ENCODE measurements at regions of chr3 and their contacts with region 1.

Region 1: DNA sequence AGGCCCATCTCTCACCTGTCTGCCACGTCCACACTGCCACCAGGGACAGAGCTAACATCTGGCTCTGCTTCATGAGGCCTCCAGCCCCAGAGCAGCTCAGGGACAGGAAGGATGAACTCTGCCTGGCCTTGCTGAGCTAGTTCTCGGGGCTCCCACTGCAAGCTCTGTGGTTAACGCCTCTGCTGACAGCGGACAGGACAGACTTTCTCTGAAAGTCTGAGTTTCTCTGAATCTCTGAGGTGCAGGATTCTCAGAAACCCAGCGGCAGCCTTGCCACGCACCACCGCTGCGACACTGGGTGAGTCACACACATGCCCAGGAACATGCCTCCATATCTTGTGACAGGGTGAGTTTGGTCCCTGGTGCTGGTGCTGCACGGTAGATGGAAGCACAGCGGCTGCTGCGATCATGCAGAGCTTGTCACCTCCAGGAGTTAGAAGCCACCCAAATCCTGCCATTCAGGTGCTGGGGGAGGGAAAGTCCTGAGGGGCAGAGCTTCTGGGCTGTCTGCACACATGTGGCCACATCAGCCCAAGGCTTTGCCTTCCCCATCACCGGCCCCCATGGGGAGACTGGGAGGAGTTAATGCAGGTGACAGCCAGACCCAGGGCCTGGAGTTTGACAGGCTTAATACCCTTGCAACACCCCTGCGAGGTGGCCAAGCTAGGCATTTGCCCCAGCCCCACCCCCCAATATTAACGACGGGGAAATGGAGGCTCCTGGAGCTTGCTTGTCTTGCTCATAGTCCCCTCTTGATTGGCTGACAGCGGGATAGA is 267.0 kb downstream of the PLCL2 start:
- DNase-seq: peak; percentile 80 to 87
- ATAC-seq: peak; percentile 82 to 90 (median 87)
- H3K4me3 ChIP-seq: peak overlapping the region; percentile 2
- H3K4me3 Mint-ChIP-seq: peak overlapping the region; percentile 75
- H3K27ac ChIP-seq: peak overlapping the region; percentile 81
- H3K27ac Mint-ChIP-seq: peak overlapping the region; percentile 85 to 86
- H3K4me1 ChIP-seq: peaks cover 68% of the 10 kb centered on the region
- H3K4me1 Mint-ChIP-seq: peaks cover 74 to 80% of the 10 kb centered on the region in 2 donors
- H3K27me3 ChIP-seq: no peaks in the 10 kb centered on the region
- H3K27me3 Mint-ChIP-seq: no peaks in the 10 kb centered on the region
- CTCF ChIP-seq: no peak

Region 2: DNA sequence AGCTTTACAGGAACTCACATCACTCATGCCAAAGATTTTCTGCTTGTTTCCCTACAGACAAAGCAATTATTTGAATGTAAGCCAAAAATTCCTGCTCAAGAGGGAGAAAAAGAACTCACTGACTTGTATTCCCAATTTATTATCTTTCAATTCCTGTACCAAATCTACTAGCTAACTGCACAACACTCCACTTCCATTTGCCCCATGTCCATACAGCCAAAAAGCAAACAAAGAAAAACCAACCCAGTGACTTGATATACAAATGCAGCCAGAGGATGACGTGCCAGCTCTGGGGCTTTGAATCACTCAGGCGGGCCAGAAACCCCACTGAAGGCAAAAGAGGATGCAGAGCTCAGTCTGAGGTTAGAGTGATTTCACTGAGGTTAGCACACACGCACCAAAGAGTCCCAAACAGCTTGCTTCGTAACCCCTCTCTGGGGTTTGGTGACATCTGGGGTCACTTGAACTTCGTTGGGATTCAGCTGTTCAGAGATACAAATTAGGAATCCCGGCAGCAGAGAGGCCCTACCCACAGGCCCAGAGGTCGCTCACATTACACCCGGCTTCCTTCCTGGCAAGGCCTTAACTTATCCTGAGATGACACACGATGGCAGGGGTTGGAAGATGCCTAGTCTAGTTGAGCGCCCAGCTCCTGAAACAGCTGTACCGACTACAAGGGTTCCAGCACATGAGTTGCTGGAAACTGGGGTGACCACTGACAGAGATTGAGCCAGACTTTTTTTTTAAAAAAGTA is 639.9 kb before region 1 on chr3:
- intact Hi-C with region 1: loop called (anchors 10 kb)
- DNase-seq: peak; percentile 66 to 94
- ATAC-seq: peak; percentile 50 to 76 (median 74)
- H3K4me3 ChIP-seq: peak overlapping the region; percentile 70
- H3K4me3 Mint-ChIP-seq: peak overlapping the region; percentile 97
- H3K27ac ChIP-seq: peak overlapping the region; percentile 92
- H3K27ac Mint-ChIP-seq: peak overlapping the region; percentile 91 to 97
- H3K4me1 ChIP-seq: peaks cover 74% of the 10 kb centered on the region
- H3K4me1 Mint-ChIP-seq: peaks cover 80 to 88% of the 10 kb centered on the region in 2 donors
- H3K27me3 ChIP-seq: no peaks in the 10 kb centered on the region
- H3K27me3 Mint-ChIP-seq: no peaks in the 10 kb centered on the region
- CTCF ChIP-seq: no peak

Region 3: GRCh38 chr3:16639806-16640205 is 512.0 kb before region 1 on chr3:
- intact Hi-C with region 1: no loop called
- DNase-seq: no peak
- ATAC-seq: no peak
- H3K4me3 ChIP-seq: no peak overlapping the region
- H3K4me3 Mint-ChIP-seq: no peak overlapping the region
- H3K27ac ChIP-seq: no peak overlapping the region
- H3K27ac Mint-ChIP-seq: no peak overlapping the region
- H3K4me1 ChIP-seq: no peaks in the 10 kb centered on the region
- H3K4me1 Mint-ChIP-seq: no peaks in the 10 kb centered on the region
- H3K27me3 ChIP-seq: peaks cover 2% of the 10 kb centered on the region
- H3K27me3 Mint-ChIP-seq: peaks cover 13 to 31% of the 10 kb centered on the region in 2 donors
- CTCF ChIP-seq: no peak

Region 4: GRCh38 chr3:16842272-16843270 is 309.2 kb before region 1 on chr3:
- intact Hi-C with region 1: loop called (anchors 2 kb)
- DNase-seq: peak; percentile 68 to 90
- ATAC-seq: peak; percentile 84 to 90 (median 85)
- H3K4me3 ChIP-seq: peak overlapping the region; percentile 8
- H3K4me3 Mint-ChIP-seq: peak overlapping the region; percentile 93
- H3K27ac ChIP-seq: peak overlapping the region; percentile 83
- H3K27ac Mint-ChIP-seq: peak overlapping the region; percentile 98 to 99
- H3K4me1 ChIP-seq: peaks cover 52% of the 10 kb centered on the region
- H3K4me1 Mint-ChIP-seq: peaks cover 66 to 72% of the 10 kb centered on the region in 2 donors
- H3K27me3 ChIP-seq: no peaks in the 10 kb centered on the region
- H3K27me3 Mint-ChIP-seq: peaks cover 0 to 6% of the 10 kb centered on the region in 2 donors
- CTCF ChIP-seq: no peak

Region 5: GRCh38 chr3:16904423-16905417 is 247.1 kb before region 1 on chr3:
- intact Hi-C with region 1: loop called (anchors 5 kb)
- DNase-seq: peak in 1 of 2 donors; percentile 74
- ATAC-seq: peak; percentile 62 to 72 (median 71)
- H3K4me3 ChIP-seq: no peak overlapping the region
- H3K4me3 Mint-ChIP-seq: peak overlapping the region; percentile 83
- H3K27ac ChIP-seq: peak overlapping the region; percentile 51
- H3K27ac Mint-ChIP-seq: peak overlapping the region; percentile 82 to 94
- H3K4me1 ChIP-seq: peaks cover 58% of the 10 kb centered on the region
- H3K4me1 Mint-ChIP-seq: peaks cover 87 to 89% of the 10 kb centered on the region in 2 donors
- H3K27me3 ChIP-seq: no peaks in the 10 kb centered on the region
- H3K27me3 Mint-ChIP-seq: no peaks in the 10 kb centered on the region
- CTCF ChIP-seq: no peak

Region 6: DNA sequence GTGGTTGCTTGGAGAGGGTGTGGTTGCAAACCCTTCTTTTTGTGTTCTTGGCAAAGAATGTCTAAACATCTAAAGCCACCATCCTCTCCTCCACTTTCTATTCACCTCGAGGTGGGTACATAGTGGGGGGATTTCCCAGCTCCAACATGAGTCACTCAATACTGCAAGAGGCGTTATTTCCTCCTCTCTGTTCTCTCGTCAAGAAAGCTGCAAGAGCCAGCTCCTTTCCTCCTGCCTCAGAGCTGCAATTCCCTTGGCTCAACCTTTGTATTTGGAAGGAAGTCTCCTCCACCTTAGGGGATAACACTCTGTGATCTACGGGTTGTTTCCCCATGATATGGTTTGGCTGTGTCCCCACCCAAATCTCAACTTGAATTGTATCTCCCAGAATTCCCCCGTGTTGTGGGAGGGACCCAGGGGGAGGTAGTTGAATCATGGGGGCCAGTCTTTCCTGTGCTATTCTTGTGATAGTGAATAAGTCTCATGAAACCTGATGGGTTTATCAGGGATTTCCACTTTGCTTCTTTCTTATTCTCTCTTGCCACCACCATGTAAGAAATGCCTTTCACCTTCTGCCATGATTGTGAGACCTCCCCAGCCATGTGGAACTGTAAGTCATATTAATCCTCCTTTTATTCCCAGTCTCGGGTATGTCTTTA is 128.7 kb before region 1 on chr3:
- intact Hi-C with region 1: loop called (anchors 1 kb)
- DNase-seq: peak; percentile 45 to 80
- ATAC-seq: peak; percentile 84 to 93 (median 92)
- H3K4me3 ChIP-seq: no peak overlapping the region
- H3K4me3 Mint-ChIP-seq: peak overlapping the region; percentile 52
- H3K27ac ChIP-seq: peak overlapping the region; percentile 42
- H3K27ac Mint-ChIP-seq: peak overlapping the region; percentile 86 to 99
- H3K4me1 ChIP-seq: peaks cover 24% of the 10 kb centered on the region
- H3K4me1 Mint-ChIP-seq: peaks cover 66 to 67% of the 10 kb centered on the region in 2 donors
- H3K27me3 ChIP-seq: no peaks in the 10 kb centered on the region
- H3K27me3 Mint-ChIP-seq: no peaks in the 10 kb centered on the region
- CTCF ChIP-seq: no peak

Region 7: GRCh38 chr3:17088602-17089313 is 63.0 kb before region 1 on chr3:
- intact Hi-C with region 1: loop called (anchors 2 kb)
- DNase-seq: peak; percentile 57 to 72
- ATAC-seq: peak; percentile 75 to 89 (median 77)
- H3K4me3 ChIP-seq: no peak overlapping the region
- H3K4me3 Mint-ChIP-seq: peak overlapping the region; percentile 87
- H3K27ac ChIP-seq: peak overlapping the region; percentile 4
- H3K27ac Mint-ChIP-seq: peak overlapping the region; percentile 65 to 80
- H3K4me1 ChIP-seq: peaks cover 25% of the 10 kb centered on the region
- H3K4me1 Mint-ChIP-seq: peaks cover 58 to 62% of the 10 kb centered on the region in 2 donors
- H3K27me3 ChIP-seq: no peaks in the 10 kb centered on the region
- H3K27me3 Mint-ChIP-seq: no peaks in the 10 kb centered on the region
- CTCF ChIP-seq: no peak

Region 8: GRCh38 chr3:17190353-17191078 is 38.7 kb after region 1 on chr3:
- intact Hi-C with region 1: no loop called
- DNase-seq: no peak
- ATAC-seq: peak; percentile 41 to 63 (median 47)
- H3K4me3 ChIP-seq: no peak overlapping the region
- H3K4me3 Mint-ChIP-seq: peak overlapping the region; percentile 28
- H3K27ac ChIP-seq: peak overlapping the region; percentile 17
- H3K27ac Mint-ChIP-seq: peak overlapping the region in 1 of 2 donors; percentile 50
- H3K4me1 ChIP-seq: peaks cover 16% of the 10 kb centered on the region
- H3K4me1 Mint-ChIP-seq: peaks cover 21 to 25% of the 10 kb centered on the region in 2 donors
- H3K27me3 ChIP-seq: no peaks in the 10 kb centered on the region
- H3K27me3 Mint-ChIP-seq: no peaks in the 10 kb centered on the region
- CTCF ChIP-seq: no peak

Region 9: GRCh38 chr3:17213102-17213501 is 61.3 kb after region 1 on chr3:
- intact Hi-C with region 1: no loop called
- DNase-seq: no peak
- ATAC-seq: no peak
- H3K4me3 ChIP-seq: no peak overlapping the region
- H3K4me3 Mint-ChIP-seq: no peak overlapping the region
- H3K27ac ChIP-seq: no peak overlapping the region
- H3K27ac Mint-ChIP-seq: no peak overlapping the region
- H3K4me1 ChIP-seq: no peaks in the 10 kb centered on the region
- H3K4me1 Mint-ChIP-seq: no peaks in the 10 kb centered on the region
- H3K27me3 ChIP-seq: no peaks in the 10 kb centered on the region
- H3K27me3 Mint-ChIP-seq: no peaks in the 10 kb centered on the region
- CTCF ChIP-seq: no peak

Region 10: GRCh38 chr3:17782751-17783150 is 631.0 kb after region 1 on chr3:
- intact Hi-C with region 1: no loop called
- DNase-seq: no peak
- ATAC-seq: no peak
- H3K4me3 ChIP-seq: no peak overlapping the region
- H3K4me3 Mint-ChIP-seq: no peak overlapping the region
- H3K27ac ChIP-seq: no peak overlapping the region
- H3K27ac Mint-ChIP-seq: no peak overlapping the region
- H3K4me1 ChIP-seq: no peaks in the 10 kb centered on the region
- H3K4me1 Mint-ChIP-seq: peaks cover 0 to 8% of the 10 kb centered on the region in 2 donors
- H3K27me3 ChIP-seq: no peaks in the 10 kb centered on the region
- H3K27me3 Mint-ChIP-seq: peaks cover 9 to 10% of the 10 kb centered on the region in 2 donors
- CTCF ChIP-seq: no peak

Measured in natural killer cell (primary cell).